Endothelial cell of umbilical vein (primary cell): ENCODE measurements at regions of chr11 and their contacts with region 1.

Region 1: DNA sequence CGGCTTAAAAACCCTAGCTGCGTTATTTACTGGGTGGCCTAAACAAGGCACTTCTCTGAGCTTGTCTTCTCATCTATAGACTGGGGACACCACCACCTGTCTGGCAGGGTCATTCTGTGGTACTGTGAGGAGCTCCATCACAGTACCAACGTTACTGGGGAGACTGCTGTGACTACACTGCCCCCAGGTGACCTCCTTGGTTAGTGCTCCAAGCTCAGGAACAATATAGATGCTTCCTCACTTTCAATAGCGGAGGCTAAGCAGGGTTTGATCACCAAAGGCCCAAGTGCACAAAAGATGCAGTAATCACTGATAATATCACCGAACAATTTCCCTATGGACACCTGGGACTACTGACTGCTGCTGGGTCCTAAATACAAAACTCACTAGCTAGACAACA is 18.8 kb downstream of the PRPF19 start:
- DNase-seq: peak; percentile 56
- H3K4me3 ChIP-seq: no peak overlapping the region
- H3K27ac ChIP-seq: no peak overlapping the region
- H3K4me1 ChIP-seq: peaks cover 20% of the 10 kb centered on the region
- H3K27me3 ChIP-seq: no peaks in the 10 kb centered on the region
- CTCF ChIP-seq: peak; percentile 53 to 66
- POLR2A ChIP-seq: no peak

Region 2: DNA sequence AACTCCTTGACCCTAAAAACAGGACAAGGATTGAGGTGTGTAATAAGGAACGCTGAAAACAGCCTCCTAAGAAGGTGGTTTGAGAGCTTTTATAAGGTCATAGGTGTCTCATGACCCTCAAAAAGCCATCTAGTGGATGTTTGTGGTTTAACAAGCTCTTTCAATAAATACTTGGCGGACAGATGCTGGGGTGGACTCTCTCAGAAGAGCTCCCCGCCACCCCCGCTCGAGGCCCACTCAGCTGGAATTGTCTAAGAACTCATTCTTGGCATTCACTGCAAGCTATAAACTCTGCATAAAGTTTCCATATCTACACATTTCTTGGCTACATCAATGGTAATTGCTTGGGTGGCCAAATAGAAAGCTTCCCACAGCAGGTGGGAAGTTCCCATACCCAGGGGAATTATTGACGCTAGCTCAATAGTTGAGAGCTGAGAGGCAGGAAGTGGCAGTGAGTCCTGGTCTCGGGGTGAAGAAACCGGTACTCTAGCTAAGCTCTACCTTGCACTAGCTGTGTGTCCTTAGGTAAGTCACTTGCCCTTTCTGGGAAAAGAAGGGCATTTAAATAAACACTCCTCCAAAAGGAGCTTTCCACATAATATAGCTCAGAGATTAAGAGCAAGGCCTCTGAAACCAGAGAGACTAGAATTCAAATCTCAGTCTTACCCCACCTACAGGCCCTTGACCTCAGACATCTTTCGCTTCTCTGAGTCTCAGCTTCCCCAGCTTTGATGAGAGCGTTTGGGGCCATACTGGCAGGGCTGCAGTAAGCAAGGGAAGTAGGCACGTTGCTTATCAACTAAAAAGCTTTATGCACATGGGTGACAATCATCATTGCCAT is 124.5 kb before region 1 on chr11:
- CTCF ChIA-PET with region 1: interaction called, 14 read pairs
- POLR2A ChIA-PET with region 1: no interaction called
- dilution Hi-C with region 1: no loop called
- intact Hi-C with region 1: no loop called
- DNase-seq: no peak
- H3K4me3 ChIP-seq: no peak overlapping the region
- H3K27ac ChIP-seq: no peak overlapping the region
- H3K4me1 ChIP-seq: no peaks in the 10 kb centered on the region
- H3K27me3 ChIP-seq: peaks cover 12 to 24% of the 10 kb centered on the region in 2 experiments
- CTCF ChIP-seq: peak; percentile 6 to 17
- POLR2A ChIP-seq: no peak

Region 3: DNA sequence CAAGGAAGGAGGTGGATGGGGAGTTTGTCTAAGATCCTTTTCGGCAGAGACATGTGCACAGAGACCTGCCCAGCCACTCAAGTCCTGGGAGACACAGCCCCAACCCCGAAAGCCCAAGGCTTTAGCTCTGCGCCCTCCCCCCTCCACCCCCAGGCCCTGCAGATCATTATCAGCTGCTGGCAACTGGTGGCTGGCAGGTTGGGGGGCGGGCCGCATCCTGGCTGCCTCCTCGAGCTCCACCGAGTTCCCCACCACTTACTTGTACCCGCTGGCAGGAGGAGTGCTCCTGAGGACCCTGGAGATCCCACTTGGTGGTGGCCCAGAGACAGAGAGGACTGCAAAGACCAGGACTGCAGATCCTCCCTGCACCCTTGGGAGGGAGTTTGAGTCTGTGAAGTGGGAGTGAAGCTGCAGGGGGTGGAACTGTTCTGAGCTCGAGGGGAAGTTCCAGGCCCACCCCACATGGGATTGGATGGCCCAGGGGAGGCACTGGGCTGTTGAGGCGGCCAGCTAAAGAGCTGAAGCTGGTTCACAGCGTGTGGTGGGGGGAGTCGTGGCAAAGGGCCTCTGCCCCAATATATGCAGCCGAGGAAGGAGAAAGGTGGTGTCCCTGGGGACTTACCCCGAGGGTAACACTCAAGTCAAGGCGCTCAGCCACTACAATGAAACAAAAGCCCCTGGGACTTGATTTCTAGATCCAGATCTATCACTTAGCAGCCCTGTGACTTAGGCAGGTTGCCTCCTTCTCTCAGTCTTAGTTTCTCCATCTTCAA is 65.5 kb before region 1 on chr11:
- CTCF ChIA-PET with region 1: interaction called, 607 read pairs
- POLR2A ChIA-PET with region 1: no interaction called
- dilution Hi-C with region 1: no loop called
- intact Hi-C with region 1: no loop called
- DNase-seq: no peak
- H3K4me3 ChIP-seq: no peak overlapping the region
- H3K27ac ChIP-seq: no peak overlapping the region
- H3K4me1 ChIP-seq: no peaks in the 10 kb centered on the region
- H3K27me3 ChIP-seq: no peaks in the 10 kb centered on the region
- CTCF ChIP-seq: no peak
- POLR2A ChIP-seq: no peak

Region 4: DNA sequence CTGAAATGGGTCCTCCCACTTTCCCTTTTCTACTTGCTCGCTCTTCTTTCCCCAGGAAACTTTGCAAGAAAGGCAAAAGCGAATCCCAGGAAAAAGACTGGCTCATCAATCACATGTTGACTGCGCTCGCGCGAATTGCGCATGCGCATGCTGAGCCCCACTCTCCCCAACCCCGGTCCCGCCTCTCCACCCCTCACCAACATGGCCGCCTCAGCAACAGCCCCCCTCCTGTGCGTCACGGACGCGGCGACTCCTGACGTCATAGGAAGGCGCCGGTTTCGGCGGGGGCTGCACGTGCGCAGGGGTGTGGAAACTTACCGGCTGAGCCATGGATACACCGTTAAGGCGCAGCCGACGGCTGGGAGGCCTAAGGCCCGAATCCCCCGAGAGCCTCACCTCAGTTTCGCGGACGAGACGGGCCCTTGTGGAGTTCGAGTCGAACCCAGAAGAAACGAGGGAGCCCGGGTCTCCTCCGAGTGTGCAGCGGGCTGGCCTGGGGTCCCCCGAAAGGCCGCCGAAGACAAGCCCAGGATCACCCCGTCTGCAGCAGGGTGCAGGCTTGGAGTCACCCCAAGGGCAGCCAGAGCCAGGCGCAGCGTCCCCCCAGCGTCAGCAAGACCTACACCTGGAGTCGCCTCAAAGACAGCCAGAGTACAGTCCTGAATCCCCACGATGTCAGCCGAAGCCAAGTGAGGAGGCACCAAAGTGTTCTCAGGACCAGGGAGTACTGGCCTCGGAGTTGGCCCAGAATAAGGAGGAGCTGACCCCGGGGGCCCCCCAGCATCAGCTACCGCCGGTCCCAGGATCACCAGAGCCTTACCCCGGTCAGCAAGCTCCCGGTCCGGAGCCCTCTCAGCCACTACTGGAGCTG is 45.5 kb before region 1 on chr11 and contains the start of gene CCDC86:
- CTCF ChIA-PET with region 1: interaction called, 607 read pairs
- POLR2A ChIA-PET with region 1: interaction called, 3 read pairs
- dilution Hi-C with region 1: no loop called
- intact Hi-C with region 1: no loop called
- DNase-seq: peak; percentile 96
- H3K4me3 ChIP-seq: peak within 1 kb of the TSS; percentile 64 to 74 (median 73)
- H3K27ac ChIP-seq: peak within 1 kb of the TSS; percentile 65
- H3K4me1 ChIP-seq: peaks cover 37% of the 10 kb centered on the region
- H3K27me3 ChIP-seq: no peaks in the 10 kb centered on the region
- CTCF ChIP-seq: no peak
- POLR2A ChIP-seq: peak; percentile 59
- total RNA-seq, gene CCDC86: 57.6 and 60.8 TPM in 2 replicates

Region 5: GRCh38 chr11:60860943-60861342 is 26.6 kb before region 1 on chr11:
- CTCF ChIA-PET with region 1: interaction called, 10 read pairs
- POLR2A ChIA-PET with region 1: no interaction called
- dilution Hi-C with region 1: no loop called
- intact Hi-C with region 1: no loop called
- DNase-seq: no peak
- H3K4me3 ChIP-seq: no peak overlapping the region
- H3K27ac ChIP-seq: no peak overlapping the region
- H3K4me1 ChIP-seq: no peaks in the 10 kb centered on the region
- H3K27me3 ChIP-seq: no peaks in the 10 kb centered on the region
- CTCF ChIP-seq: no peak
- POLR2A ChIP-seq: no peak

Region 6: GRCh38 chr11:61173456-61173855 is 285.9 kb after region 1 on chr11:
- CTCF ChIA-PET with region 1: no interaction called
- POLR2A ChIA-PET with region 1: no interaction called
- dilution Hi-C with region 1: no loop called
- intact Hi-C with region 1: no loop called
- DNase-seq: peak; percentile 21
- H3K4me3 ChIP-seq: no peak overlapping the region
- H3K27ac ChIP-seq: no peak overlapping the region
- H3K4me1 ChIP-seq: no peaks in the 10 kb centered on the region
- H3K27me3 ChIP-seq: peaks cover 5 to 18% of the 10 kb centered on the region in 2 experiments
- CTCF ChIP-seq: no peak
- POLR2A ChIP-seq: no peak